ENCODE measurements at regions of chr5 and their contacts with region 1.

Region 1: DNA sequence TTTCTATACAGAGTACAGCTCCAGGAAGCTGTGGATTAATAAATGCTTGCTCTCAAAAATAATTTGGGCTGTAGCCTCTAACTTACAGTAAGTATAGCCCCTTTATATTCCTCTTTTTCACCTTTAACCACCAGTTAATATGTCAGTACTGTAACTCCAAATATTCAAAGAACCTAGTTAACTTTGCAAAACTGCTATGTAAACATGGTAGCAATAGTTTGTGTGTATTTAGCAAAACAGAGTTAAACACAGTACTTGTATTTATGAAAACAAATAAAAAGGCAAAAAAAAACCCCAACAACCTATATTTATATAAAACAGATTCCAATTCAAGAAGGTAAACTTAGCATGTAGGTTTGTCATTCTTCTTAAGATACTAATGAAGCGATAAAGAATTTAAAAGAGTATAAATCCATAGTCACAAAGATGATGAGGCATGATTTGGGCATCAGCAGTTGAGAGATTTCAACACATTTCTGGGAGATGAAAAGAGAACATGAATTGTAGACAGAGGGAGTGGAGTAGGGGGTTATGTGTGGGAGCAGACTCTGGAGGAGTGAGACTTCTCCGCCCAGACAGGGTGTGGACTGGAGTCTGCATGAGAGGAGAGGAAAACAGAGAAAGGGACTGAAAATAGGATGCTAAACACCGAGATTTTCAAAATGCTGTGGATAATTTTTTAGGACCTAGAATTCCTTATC is 47.0 kb upstream of the F2RL1 start:
- DNase-seq: no peak
- H3K4me3 ChIP-seq: no peak overlapping the region
- H3K4me3 Mint-ChIP-seq: peak overlapping the region in 1 of 7 donors; percentile 67
- H3K27ac ChIP-seq: no peak overlapping the region
- H3K27ac Mint-ChIP-seq: peak overlapping the region in 1 of 8 donors; percentile 30
- H3K4me1 ChIP-seq: no peaks in the 10 kb centered on the region
- H3K4me1 Mint-ChIP-seq: peaks cover 3 to 5% (median 4%) of the 10 kb centered on the region in 3 donors
- H3K27me3 ChIP-seq: no peaks in the 10 kb centered on the region
- H3K27me3 Mint-ChIP-seq: peaks cover 0 to 3% of the 10 kb centered on the region in 2 donors

Region 2: DNA sequence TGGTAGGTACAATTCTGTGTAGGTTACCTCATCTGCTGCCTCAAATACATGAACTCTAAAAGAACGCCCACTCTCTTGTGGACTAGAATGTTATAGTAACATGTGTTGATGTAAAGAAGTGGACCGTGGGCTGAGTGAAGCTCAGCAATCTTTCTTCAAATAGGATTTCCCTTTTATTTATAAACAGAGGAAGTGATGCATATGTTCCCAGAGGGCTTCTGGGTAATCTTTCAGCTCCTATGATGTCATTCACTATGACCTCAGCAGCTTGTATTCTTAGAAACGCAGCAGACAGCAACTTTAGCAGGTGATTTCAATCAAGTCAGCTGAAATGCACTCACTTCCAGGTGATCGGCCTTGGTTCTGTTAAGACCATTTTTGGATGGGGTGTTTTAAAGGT is 163.0 kb before region 1 on chr5:
- CTCF ChIA-PET with region 1: interaction called, 85 read pairs
- POLR2A ChIA-PET with region 1: no interaction called
- DNase-seq: no peak
- H3K4me3 ChIP-seq: no peak overlapping the region
- H3K4me3 Mint-ChIP-seq: no peak overlapping the region
- H3K27ac ChIP-seq: no peak overlapping the region
- H3K27ac Mint-ChIP-seq: peak overlapping the region in 4 of 8 donors; percentile 3 to 59 (median 35)
- H3K4me1 ChIP-seq: no peaks in the 10 kb centered on the region
- H3K4me1 Mint-ChIP-seq: peaks cover 19 to 36% (median 26%) of the 10 kb centered on the region in 3 donors
- H3K27me3 ChIP-seq: no peaks in the 10 kb centered on the region
- H3K27me3 Mint-ChIP-seq: no peaks in the 10 kb centered on the region

Region 3: DNA sequence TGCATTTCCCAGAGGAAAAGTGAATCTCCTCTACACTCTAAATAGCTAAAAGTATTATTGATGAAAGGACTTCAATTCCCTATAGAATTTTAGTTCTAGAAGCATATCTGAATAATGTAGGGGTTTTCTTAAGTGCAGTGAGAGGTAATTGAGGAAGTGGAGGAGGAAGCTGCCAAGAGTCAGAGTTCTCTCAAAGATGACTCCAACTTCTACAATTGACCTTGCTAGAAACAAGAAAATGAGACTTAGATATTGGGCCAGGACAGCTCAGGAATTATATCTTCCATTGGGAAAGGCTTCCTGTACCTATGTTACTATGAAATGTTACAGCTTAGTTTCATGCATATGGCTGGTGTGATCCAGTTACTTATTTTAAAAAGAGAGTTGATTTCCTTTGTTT is 66.3 kb before region 1 on chr5:
- CTCF ChIA-PET with region 1: interaction called, 16 read pairs
- POLR2A ChIA-PET with region 1: no interaction called
- DNase-seq: no peak
- H3K4me3 ChIP-seq: no peak overlapping the region
- H3K4me3 Mint-ChIP-seq: no peak overlapping the region
- H3K27ac ChIP-seq: no peak overlapping the region
- H3K27ac Mint-ChIP-seq: peak overlapping the region in 1 of 8 donors; percentile 10
- H3K4me1 ChIP-seq: no peaks in the 10 kb centered on the region
- H3K4me1 Mint-ChIP-seq: peaks cover 3% of the 10 kb centered on the region in 3 donors
- H3K27me3 ChIP-seq: no peaks in the 10 kb centered on the region
- H3K27me3 Mint-ChIP-seq: no peaks in the 10 kb centered on the region

Region 4: GRCh38 chr5:76720988-76721569 is 50.8 kb before region 1 on chr5:
- CTCF ChIA-PET with region 1: interaction called, 79 read pairs
- POLR2A ChIA-PET with region 1: interaction called, 4 read pairs
- DNase-seq: no peak
- H3K4me3 ChIP-seq: no peak overlapping the region
- H3K4me3 Mint-ChIP-seq: peak overlapping the region in 6 of 7 donors; percentile 1 to 60 (median 44)
- H3K27ac ChIP-seq: no peak overlapping the region
- H3K27ac Mint-ChIP-seq: peak overlapping the region in 7 of 8 donors; percentile 14 to 93 (median 64)
- H3K4me1 ChIP-seq: peaks cover 5% of the 10 kb centered on the region
- H3K4me1 Mint-ChIP-seq: peaks cover 60 to 85% (median 84%) of the 10 kb centered on the region in 3 donors
- H3K27me3 ChIP-seq: no peaks in the 10 kb centered on the region
- H3K27me3 Mint-ChIP-seq: no peaks in the 10 kb centered on the region

Region 5: GRCh38 chr5:76745670-76746069 is 26.2 kb before region 1 on chr5:
- CTCF ChIA-PET with region 1: interaction called, 69 read pairs
- POLR2A ChIA-PET with region 1: interaction called, 3 read pairs
- DNase-seq: no peak
- H3K4me3 ChIP-seq: no peak overlapping the region
- H3K4me3 Mint-ChIP-seq: no peak overlapping the region
- H3K27ac ChIP-seq: no peak overlapping the region
- H3K27ac Mint-ChIP-seq: no peak overlapping the region
- H3K4me1 ChIP-seq: no peaks in the 10 kb centered on the region
- H3K4me1 Mint-ChIP-seq: peaks cover 8 to 10% (median 9%) of the 10 kb centered on the region in 3 donors
- H3K27me3 ChIP-seq: no peaks in the 10 kb centered on the region
- H3K27me3 Mint-ChIP-seq: no peaks in the 10 kb centered on the region